ENCODE measurements at regions of chr3 and their contacts with region 1.

Region 1: DNA sequence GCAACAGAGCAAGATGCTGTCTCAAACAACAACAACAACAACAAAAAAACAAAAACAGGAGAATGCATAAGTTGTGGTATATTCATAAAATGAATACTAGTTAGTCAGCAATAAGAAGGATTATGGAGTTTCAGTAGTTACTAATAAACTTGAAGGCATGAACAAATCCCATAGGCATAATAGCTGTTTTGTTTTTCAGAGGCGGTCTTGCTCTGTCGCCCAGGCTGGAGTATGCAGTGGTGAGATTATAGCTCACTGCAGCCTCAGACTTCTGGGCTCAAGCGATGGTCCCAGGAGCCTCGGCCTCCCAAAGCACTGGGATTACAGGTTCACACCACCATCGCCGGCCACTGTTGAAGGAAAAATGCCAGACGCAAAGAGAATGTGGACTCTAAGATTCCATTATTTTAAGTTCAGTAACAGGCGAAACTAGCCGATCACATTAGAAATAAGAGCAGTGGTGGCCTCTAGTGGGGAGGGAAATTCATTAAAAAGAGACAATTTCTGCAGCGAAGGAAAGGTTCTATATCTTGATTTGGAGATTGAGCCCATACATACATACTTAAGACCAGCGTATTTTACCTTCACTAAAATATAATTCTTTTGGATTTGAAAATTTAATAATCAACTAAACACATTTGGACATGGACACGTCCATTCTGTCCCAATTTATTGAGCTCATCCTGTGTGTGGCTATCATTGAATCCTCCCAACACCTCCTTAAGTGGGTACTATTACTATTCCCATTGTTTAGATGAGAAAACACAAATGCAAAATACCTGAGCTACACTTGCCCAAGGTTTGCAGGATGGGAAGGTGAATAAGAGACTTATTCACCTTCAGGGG is 27.4 kb upstream of the HDAC11 start:
- H3K4me3 Mint-ChIP-seq: peak overlapping the region; percentile 84
- H3K27ac Mint-ChIP-seq: peak overlapping the region; percentile 84
- H3K4me1 Mint-ChIP-seq: peaks cover 18% of the 10 kb centered on the region
- H3K27me3 Mint-ChIP-seq: no peaks in the 10 kb centered on the region

Region 2: GRCh38 chr3:13091898-13092611 is 360.7 kb before region 1 on chr3:
- intact Hi-C with region 1: loop called (anchors 1 kb)
- H3K4me3 Mint-ChIP-seq: no peak overlapping the region
- H3K27ac Mint-ChIP-seq: no peak overlapping the region
- H3K4me1 Mint-ChIP-seq: peaks cover 32% of the 10 kb centered on the region
- H3K27me3 Mint-ChIP-seq: peaks cover 43% of the 10 kb centered on the region

Region 3: GRCh38 chr3:13346481-13347389 is 106.0 kb before region 1 on chr3:
- intact Hi-C with region 1: loop called (anchors 2 kb)
- H3K4me3 Mint-ChIP-seq: no peak overlapping the region
- H3K27ac Mint-ChIP-seq: peak overlapping the region; percentile 71
- H3K4me1 Mint-ChIP-seq: peaks cover 37% of the 10 kb centered on the region
- H3K27me3 Mint-ChIP-seq: no peaks in the 10 kb centered on the region

Region 4: GRCh38 chr3:13414040-13414729 is 38.5 kb before region 1 on chr3:
- intact Hi-C with region 1: loop called (anchors 1 kb)
- H3K4me3 Mint-ChIP-seq: peak overlapping the region; percentile 65
- H3K27ac Mint-ChIP-seq: peak overlapping the region; percentile 91
- H3K4me1 Mint-ChIP-seq: peaks cover 73% of the 10 kb centered on the region
- H3K27me3 Mint-ChIP-seq: no peaks in the 10 kb centered on the region

Region 5: DNA sequence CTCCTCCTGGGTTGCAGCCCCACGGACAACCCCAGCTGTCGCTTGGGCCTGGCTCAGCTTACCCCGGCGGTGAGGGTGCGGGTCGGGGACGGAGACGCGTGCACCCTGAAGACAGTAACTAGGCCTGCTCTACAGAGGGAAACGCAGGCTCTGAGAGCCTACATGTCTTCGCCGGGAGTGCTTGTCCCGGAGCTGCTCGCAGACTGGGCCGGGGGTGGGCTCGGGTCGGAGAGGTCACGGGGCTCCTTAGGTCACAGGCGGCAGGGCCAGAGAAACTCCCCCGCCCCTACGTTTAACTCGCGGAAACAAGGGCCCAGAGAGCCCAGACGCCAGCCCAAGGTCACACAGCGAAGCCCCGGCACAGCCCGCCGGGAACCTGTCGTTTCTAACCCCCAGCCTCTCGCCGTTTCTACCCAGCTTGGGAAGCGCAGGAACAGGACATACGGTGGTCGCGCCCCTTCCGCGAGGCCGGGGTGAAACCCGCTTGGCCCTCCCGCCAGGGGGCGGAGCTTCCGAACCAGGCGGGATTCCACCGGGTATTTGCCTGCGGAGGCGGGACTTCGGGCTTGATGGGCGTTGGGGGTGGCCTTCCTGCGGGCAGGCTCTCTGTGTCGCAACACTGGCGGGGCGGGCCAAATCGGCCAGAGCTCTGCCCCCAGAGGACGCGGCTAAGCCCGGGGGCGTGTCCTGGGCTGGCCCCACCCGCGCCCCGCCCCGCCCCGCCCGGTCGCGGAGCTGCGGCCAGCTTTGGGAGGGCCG is 27.0 kb after region 1 on chr3 and contains the start of gene HDAC11:
- intact Hi-C with region 1: loop called (anchors 2 kb)
- H3K4me3 Mint-ChIP-seq: peak within 1 kb of the TSS; percentile 91
- H3K27ac Mint-ChIP-seq: peak within 1 kb of the TSS; percentile 97
- H3K4me1 Mint-ChIP-seq: peaks cover 24% of the 10 kb centered on the region
- H3K27me3 Mint-ChIP-seq: peaks cover 9% of the 10 kb centered on the region